Activated T-helper 1 cell treated with anti-CD3 and anti-CD28 coated beads, Interleukin-12 subunit alpha, Interleukin-12 subunit beta, Interleukin-2, Interleukin-4 antibody, amounts not matched to agents 30 ng/mL and 10 ng/mL and 1 ng/mL, durations not matched to agents 14 hours and 24 hours and 36 hours (primary cell): ENCODE measurements at regions of chr16 and their contacts with region 1.

Region 1: DNA sequence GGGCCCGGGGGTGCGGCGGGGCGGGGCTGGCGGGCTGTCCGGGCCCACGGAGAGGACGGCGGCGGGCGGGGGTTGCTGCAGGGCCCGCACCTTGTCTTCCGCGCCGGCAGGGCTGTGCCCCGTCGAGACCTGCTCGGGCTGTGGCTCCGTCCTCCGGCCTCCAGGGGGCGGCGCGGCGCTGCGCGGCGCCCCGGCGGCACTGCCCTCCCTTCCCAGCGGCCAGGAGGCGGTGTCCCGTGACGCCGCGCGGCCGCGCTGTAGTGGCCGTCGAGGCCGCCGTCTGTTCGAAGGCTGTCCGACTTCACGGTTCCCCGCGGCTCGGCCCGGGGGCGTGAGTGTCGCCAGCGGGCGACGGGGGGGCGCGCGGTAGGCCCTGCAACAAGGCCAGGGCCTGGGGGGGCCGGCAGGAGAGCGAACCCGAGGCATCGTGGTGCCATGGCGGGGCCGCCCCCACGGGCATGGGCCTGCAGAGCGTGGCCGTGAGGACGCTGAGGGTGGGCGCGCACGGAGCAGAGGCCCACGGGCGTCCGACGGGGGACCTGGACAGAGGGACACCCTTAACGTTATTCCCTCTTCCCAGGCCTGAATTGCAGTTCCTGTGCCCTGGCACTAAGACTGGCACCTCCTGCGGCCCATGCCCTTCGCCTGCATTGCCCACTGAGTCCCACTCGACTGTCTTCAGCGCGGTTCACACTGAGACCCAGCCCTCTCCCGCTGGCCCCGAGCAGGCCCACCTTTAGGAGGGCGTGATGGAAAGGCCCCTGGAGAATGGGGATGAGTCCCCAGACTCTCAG is at the start of gene PLEKHG4:
- DNase-seq: peak; percentile 80
- H3K4me3 Mint-ChIP-seq: peak within 1 kb of the TSS; percentile 88
- H3K27ac Mint-ChIP-seq: peak within 1 kb of the TSS; percentile 86
- H3K4me1 Mint-ChIP-seq: peaks cover 30% of the 10 kb centered on the region
- H3K27me3 Mint-ChIP-seq: no peaks in the 10 kb centered on the region
- total RNA-seq, gene PLEKHG4: 39.6 and 42.3 TPM in 2 replicates

Region 2: GRCh38 chr16:67226804-67227557 is 52.5 kb before region 1 on chr16 and contains the start of gene TMEM208:
- intact Hi-C with region 1: loop called (anchors 1 kb)
- DNase-seq: peak; percentile 99
- H3K4me3 Mint-ChIP-seq: peak within 1 kb of the TSS; percentile 98
- H3K27ac Mint-ChIP-seq: peak within 1 kb of the TSS; percentile 94
- H3K4me1 Mint-ChIP-seq: peaks cover 43% of the 10 kb centered on the region
- H3K27me3 Mint-ChIP-seq: no peaks in the 10 kb centered on the region
- total RNA-seq, gene TMEM208: 68.5 and 72.4 TPM in 2 replicates

Region 3: DNA sequence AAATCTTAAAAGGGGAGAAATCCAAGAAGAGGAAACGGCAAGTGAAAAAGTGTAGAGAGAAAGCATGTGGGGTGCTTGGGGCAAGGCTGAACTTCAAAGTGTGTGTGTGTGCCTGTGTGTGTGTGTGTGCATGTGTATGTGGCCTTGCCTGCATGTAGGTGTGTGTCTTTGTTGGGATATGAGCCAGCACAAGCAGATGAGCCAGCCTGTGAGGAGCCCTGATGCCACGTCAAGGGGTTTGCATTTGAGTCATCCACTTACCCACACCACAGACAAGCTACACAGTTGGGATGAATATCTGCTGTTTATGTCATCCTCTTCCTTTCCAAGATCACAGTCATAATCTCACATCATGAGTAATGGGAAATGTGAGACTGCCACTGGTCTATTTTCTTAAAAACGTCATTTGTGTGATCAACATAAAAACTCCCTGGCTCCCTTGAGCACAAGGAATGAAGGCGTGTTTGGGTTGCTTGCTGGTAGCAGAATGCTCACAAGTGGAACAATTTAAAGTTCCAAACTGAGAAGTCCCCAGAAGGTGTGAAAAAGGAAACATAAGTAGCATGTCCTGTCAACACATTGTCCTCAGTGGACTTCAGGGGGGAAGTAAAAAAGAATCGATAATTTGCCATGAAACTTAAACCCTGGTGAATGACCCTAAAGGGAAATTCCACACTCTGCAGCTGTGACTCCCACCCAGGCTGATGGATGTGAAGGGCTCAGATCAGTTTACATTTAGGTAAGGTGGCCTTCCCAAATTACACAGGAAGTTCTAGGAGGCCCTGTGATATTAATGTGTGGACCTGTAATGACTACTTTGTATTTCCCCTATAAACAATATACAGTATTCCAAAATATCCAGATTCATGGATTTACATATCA is 32.4 kb after region 1 on chr16:
- intact Hi-C with region 1: loop called (anchors 1 kb)
- DNase-seq: peak; percentile 78
- H3K4me3 Mint-ChIP-seq: peak overlapping the region; percentile 19
- H3K27ac Mint-ChIP-seq: peak overlapping the region; percentile 98
- H3K4me1 Mint-ChIP-seq: peaks cover 45% of the 10 kb centered on the region
- H3K27me3 Mint-ChIP-seq: no peaks in the 10 kb centered on the region

Region 4: GRCh38 chr16:67339453-67339852 is 60.0 kb after region 1 on chr16:
- intact Hi-C with region 1: loop called (anchors 1 kb)
- DNase-seq: no peak
- H3K4me3 Mint-ChIP-seq: no peak overlapping the region
- H3K27ac Mint-ChIP-seq: no peak overlapping the region
- H3K4me1 Mint-ChIP-seq: no peaks in the 10 kb centered on the region
- H3K27me3 Mint-ChIP-seq: peaks cover 2% of the 10 kb centered on the region

Region 5: GRCh38 chr16:67356396-67356795 is 76.9 kb after region 1 on chr16:
- intact Hi-C with region 1: no loop called
- DNase-seq: no peak
- H3K4me3 Mint-ChIP-seq: no peak overlapping the region
- H3K27ac Mint-ChIP-seq: no peak overlapping the region
- H3K4me1 Mint-ChIP-seq: no peaks in the 10 kb centered on the region
- H3K27me3 Mint-ChIP-seq: peaks cover 17% of the 10 kb centered on the region

Region 6: DNA sequence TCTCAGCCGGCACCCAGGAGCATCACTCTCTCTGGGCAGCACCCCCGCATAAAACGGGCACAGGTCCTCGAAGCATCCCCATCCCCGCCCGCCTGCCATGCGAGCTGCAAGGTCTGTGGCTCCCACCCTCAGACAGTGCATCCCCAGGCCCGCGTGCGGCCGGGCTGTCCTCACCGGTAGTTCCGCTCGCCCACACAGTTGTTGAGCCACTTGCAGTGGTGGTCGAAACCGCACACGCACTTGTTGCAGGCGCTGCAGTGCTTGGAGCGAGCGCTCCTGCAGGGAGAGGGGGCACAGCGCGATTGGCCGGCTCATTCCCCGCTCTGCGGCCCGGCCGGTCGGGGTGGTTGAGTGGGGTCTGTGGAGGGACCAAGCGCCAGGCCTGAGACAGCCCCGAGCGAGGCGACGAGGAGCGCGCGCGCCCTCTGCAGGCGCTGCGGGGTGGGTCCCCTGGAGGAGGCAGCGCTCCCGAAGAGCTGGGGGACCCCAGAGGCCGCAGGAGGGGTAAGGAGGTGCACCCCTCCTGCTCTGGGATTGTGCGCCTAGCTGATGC is 119.8 kb after region 1 on chr16:
- intact Hi-C with region 1: loop called (anchors 1 kb)
- DNase-seq: peak; percentile 38
- H3K4me3 Mint-ChIP-seq: no peak overlapping the region
- H3K27ac Mint-ChIP-seq: no peak overlapping the region
- H3K4me1 Mint-ChIP-seq: peaks cover 1% of the 10 kb centered on the region
- H3K27me3 Mint-ChIP-seq: peaks cover 28% of the 10 kb centered on the region

Region 7: GRCh38 chr16:67415872-67416793 is 136.6 kb after region 1 on chr16 and contains the start of gene ZDHHC1:
- intact Hi-C with region 1: loop called (anchors 5 kb)
- DNase-seq: peak; percentile 34
- H3K4me3 Mint-ChIP-seq: peak within 1 kb of the TSS; percentile 84
- H3K27ac Mint-ChIP-seq: peak within 1 kb of the TSS; percentile 50
- H3K4me1 Mint-ChIP-seq: peaks cover 10% of the 10 kb centered on the region
- H3K27me3 Mint-ChIP-seq: peaks cover 44% of the 10 kb centered on the region
- total RNA-seq, gene ZDHHC1: 0.76 and 0.88 TPM in 2 replicates